ENCODE measurements at regions of chr3 and their contacts with region 1.

Region 1: DNA sequence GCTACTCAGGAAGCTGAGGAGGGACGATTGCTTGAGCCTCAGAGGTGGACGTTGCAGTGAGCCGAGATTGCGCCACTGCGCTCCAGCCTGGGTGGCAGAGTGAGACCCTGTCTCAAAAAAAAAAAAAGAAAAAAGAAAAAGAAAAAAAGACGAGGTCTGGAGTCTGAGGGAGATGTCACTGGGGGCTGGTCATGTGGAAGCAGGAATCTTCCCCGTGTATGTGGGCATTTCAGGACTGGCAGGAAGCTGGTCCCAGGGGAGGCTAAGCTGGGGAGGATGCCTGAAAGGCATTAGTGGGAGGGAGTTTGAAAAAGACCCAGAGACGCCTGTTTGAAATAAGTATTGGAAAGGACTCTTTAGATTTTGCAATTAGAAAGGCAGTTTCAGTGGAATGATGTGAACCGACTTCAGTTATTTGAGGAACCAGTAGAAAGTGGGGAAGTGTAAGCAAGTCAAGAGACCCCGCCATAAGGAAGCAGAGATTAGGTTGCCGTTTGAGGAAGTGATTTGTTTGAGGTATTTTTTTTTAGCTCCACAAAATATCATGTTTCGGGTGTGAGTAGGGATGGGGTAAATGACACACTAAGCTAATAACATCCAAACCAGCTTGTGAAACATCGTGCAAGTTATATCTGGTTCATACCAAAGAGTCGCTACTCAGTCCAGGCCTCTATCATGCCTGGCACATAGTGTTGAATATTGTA is 55.5 kb downstream of the ST6GAL1 start:
- DNase-seq: no peak
- H3K4me3 Mint-ChIP-seq: no peak overlapping the region
- H3K27ac Mint-ChIP-seq: no peak overlapping the region
- H3K4me1 Mint-ChIP-seq: peaks cover 41% of the 10 kb centered on the region
- H3K27me3 Mint-ChIP-seq: no peaks in the 10 kb centered on the region

Region 2: DNA sequence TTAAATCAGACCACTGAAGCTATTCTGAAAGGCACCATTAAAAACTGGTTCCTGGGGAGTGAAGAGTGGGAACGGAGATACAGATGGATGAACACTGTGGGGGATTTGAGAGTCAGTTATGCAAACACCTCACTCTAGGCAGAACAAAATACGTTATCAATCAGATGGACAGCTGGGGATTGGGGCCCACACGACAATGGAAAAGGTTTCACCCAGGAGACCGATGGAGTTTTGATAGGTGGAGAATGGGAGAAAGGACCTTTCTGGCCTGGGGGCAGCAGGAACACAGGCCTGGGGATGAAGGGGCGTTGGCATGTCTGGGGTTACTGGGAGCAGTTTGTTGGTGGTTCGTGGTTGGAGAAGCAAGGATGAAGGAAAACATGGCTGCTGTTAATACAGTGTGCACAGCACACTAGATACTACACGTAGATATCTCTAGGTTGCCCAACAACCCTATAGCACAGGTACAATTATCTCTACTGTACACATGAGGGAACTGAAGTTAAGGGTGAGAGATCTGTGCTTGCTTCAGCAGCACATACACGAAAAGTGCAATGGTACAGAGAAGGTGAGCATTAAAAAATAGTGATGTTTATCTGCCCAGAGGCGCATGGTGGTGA is 38.9 kb before region 1 on chr3:
- CTCF ChIA-PET with region 1: no interaction called
- POLR2A ChIA-PET with region 1: no interaction called
- intact Hi-C with region 1: no loop called
- DNase-seq: no peak
- H3K4me3 Mint-ChIP-seq: no peak overlapping the region
- H3K27ac Mint-ChIP-seq: no peak overlapping the region
- H3K4me1 Mint-ChIP-seq: peaks cover 57% of the 10 kb centered on the region
- H3K27me3 Mint-ChIP-seq: no peaks in the 10 kb centered on the region

Region 3: DNA sequence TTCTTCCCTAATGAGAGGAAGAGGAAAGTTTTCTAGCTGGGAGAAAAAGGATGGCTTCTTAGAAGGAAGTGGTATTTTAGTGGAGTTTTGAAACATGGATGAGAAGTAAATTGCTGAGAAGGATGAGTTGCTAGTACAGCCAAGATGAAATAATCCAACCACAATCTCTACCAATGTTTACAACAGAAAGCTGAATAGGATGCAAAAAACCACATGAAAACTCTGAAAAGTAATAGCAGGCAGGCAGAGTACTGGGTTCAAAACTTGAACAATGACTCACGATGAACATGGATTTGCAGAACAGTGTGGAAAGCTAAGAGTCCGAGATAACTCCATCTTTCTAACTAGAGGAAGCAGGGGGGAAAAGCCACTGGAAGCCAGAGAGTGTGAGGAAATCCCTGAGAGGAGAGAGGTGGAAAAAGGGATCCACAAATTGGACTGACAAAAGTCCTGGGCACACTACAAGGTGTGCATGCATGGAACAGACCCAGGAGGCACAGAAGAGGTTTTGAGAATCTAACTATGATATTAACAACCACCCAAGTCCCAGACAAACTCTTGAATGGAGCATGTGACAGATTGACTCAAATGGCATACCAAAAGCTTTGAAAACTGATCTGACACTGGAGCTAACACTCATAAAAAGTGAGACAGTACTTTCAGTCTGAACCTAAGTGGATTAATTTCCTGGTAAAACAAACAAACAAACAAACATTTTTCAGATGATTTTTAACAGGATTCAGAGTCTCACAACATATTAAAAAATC is 21.2 kb after region 1 on chr3:
- CTCF ChIA-PET with region 1: interaction called, 4 read pairs
- POLR2A ChIA-PET with region 1: interaction called, 3 read pairs
- intact Hi-C with region 1: loop called (anchors 2 kb)
- DNase-seq: no peak
- H3K4me3 Mint-ChIP-seq: no peak overlapping the region
- H3K27ac Mint-ChIP-seq: peak overlapping the region; percentile 36
- H3K4me1 Mint-ChIP-seq: peaks cover 62% of the 10 kb centered on the region
- H3K27me3 Mint-ChIP-seq: no peaks in the 10 kb centered on the region

Region 4: GRCh38 chr3:187913617-187914291 is 927.9 kb after region 1 on chr3:
- CTCF ChIA-PET with region 1: no interaction called
- POLR2A ChIA-PET with region 1: no interaction called
- intact Hi-C with region 1: no loop called
- DNase-seq: no peak
- H3K4me3 Mint-ChIP-seq: no peak overlapping the region
- H3K27ac Mint-ChIP-seq: no peak overlapping the region
- H3K4me1 Mint-ChIP-seq: peaks cover 40% of the 10 kb centered on the region
- H3K27me3 Mint-ChIP-seq: no peaks in the 10 kb centered on the region

Measured in activated CD4-positive, alpha-beta memory T cell treated with anti-CD3 and anti-CD28 coated beads for 36 hours (primary cell).